Cardiac septum (tissue), 1 donor: ENCODE measurements at regions of chr12 and their contacts with region 1.

Region 1: GRCh38 chr12:9169979-9170634 is 38.1 kb downstream of the PZP start:
- DNase-seq: no peak

Region 2: GRCh38 chr12:8785499-8785898 is 384.6 kb before region 1 on chr12:
- intact Hi-C with region 1: no loop called
- DNase-seq: no peak

Region 3: GRCh38 chr12:8969861-8970412 is 200.2 kb before region 1 on chr12:
- intact Hi-C with region 1: no loop called
- DNase-seq: no peak

Region 4: GRCh38 chr12:9244894-9245293 is 74.8 kb after region 1 on chr12:
- intact Hi-C with region 1: loop called (anchors 5 kb)
- DNase-seq: no peak

Region 5: GRCh38 chr12:9273276-9273675 is 103.2 kb after region 1 on chr12:
- intact Hi-C with region 1: no loop called
- DNase-seq: no peak